RWPE1 (cell line): ENCODE measurements at regions of chr1 and their contacts with region 1.

Region 1: GRCh38 chr1:203172128-203173010 is 3.3 kb downstream of the MYBPH start:
- DNase-seq: peak; percentile 82
- H3K27ac ChIP-seq: no peak overlapping the region
- CTCF ChIP-seq: peak; percentile 67

Region 2: GRCh38 chr1:203046984-203047630 is 125.3 kb before region 1 on chr1:
- CTCF ChIA-PET with region 1: interaction called, 28 read pairs
- POLR2A ChIA-PET with region 1: no interaction called
- DNase-seq: peak; percentile 92
- H3K27ac ChIP-seq: peak overlapping the region; percentile 57; the same call in 1 of the 2 replicates
- CTCF ChIP-seq: no peak

Region 3: DNA sequence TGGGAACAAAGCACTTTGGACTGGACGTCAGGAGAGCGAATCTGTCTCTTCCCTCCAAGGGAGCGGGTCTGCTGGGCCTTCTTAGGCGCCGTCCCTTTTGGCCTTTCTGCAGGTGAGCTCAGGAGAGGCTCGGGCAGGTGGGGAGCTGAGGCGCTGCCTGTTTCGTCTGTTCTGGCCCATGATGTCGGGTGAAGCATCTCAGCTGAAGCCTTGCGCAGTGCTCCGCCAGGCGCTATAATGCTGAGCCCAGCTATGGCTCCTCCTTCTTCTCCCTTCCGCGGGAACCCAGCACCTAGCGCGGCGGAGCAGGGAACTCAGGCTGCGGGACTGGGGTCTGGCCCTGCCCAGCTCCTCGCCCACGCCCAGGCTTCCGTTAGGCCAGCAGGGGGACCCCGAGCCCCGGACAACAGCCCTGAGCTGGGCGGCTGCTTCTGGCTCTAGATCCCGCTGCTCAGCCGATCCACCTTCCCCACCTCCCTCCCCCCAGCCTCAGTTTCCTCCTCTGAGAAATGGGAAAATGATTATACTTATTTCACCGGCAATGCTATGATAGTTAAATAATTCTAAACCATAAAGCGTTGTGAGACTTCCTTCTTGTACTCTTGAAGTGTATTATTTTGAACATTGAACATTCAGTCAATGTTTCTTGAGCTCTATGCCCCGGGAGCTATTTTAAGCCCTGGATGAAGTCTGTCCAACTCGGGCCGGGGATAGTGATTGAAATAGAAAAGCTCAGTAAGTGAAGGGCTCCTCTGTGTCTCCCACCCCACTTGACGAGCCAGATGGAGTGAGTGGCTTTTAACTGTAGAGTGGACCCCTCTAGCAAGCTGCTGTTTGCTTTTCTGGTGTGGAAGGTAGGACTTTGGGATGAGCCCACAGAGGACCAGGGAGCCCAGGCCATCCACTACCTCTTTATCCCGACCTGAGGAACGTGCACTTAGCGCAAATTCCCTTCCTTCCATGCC is 54.5 kb before region 1 on chr1:
- CTCF ChIA-PET with region 1: interaction called, 30 read pairs
- POLR2A ChIA-PET with region 1: no interaction called
- DNase-seq: peak; percentile 83
- H3K27ac ChIP-seq: no peak overlapping the region
- CTCF ChIP-seq: peak; percentile 60

Region 4: GRCh38 chr1:203148125-203148524 is 24.2 kb before region 1 on chr1:
- CTCF ChIA-PET with region 1: interaction called, 14 read pairs
- POLR2A ChIA-PET with region 1: no interaction called
- DNase-seq: peak; percentile 60
- H3K27ac ChIP-seq: no peak overlapping the region
- CTCF ChIP-seq: peak; percentile 36

Region 5: GRCh38 chr1:203153989-203154821 is 18.2 kb before region 1 on chr1:
- CTCF ChIA-PET with region 1: interaction called, 45 read pairs
- POLR2A ChIA-PET with region 1: no interaction called
- DNase-seq: peak; percentile 84
- H3K27ac ChIP-seq: peak overlapping the region; percentile 69
- CTCF ChIP-seq: no peak

Region 6: GRCh38 chr1:203186446-203187303 is 14.3 kb after region 1 on chr1 and contains the start of gene CHI3L1:
- CTCF ChIA-PET with region 1: interaction called, 25 read pairs
- POLR2A ChIA-PET with region 1: no interaction called
- DNase-seq: no peak
- H3K27ac ChIP-seq: peak within 1 kb of the TSS; percentile 65
- CTCF ChIP-seq: no peak

Region 7: DNA sequence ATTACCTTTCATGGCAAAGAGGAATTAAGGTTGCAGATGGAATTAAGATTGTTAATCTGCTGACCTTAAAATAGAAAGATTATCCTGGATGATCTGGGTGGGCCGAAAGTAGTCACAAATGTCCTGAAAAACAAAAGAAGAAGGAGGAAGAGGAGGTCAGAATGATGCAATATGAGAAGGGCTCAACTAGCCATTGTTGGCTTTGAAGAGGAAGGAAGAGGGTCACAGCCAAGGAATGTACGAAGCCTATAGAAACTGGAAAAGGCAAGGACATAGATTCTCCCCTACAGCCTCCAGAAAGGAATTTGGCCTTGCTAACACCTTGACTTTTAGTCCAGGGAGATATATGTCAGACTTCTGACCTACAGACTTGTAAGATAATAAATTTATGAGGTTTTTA is 217.9 kb after region 1 on chr1:
- CTCF ChIA-PET with region 1: no interaction called
- POLR2A ChIA-PET with region 1: no interaction called
- DNase-seq: no peak
- H3K27ac ChIP-seq: no peak overlapping the region
- CTCF ChIP-seq: no peak